Naive thymus-derived CD4-positive, alpha-beta T cell (primary cell): ENCODE measurements at regions of chr14 and their contacts with region 1.

Region 1: DNA sequence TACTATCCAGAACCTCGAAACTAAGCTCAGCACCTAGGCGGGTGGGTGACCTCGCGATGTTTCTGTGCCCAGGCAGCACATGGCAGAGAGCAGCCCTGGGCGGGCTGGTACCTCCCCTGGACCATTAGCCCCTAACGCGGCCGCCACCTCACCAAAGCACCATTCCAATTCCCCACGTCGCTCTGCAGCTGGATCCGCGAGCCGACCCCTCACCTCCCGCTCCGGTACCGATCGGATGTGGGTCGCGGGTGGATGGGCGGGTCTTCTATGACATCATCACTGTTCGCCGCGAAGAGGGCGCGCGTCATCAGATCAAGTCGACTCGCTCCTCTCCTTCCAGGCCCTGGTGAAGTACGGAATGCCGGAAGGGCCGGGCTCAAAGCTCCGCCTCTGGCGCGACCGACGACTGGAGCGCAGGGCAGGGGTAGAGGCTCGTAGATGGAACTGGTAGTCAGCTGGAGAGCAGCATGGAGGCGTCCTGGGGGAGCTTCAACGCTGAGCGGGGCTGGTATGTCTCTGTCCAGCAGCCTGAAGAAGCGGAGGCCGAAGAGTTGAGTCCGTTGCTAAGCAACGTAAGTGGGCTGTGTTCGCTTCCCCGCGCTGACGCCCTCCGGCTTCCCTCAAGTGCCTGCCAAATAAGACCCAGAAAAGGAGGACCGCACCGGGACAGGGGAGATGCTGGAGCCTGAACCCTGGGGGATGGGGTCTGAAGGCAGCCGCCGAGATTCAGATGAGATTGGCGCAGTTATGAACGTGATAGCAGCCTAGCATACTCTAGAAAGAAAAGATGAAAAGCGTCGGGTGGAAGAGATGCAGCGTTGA is at the starts of genes SLC38A6 and TRMT5:
- DNase-seq: peak; percentile 84 to 95 (median 93)
- ATAC-seq: peak; percentile 91
- H3K4me3 ChIP-seq: peak within 1 kb of the TSS; percentile 94
- H3K4me3 Mint-ChIP-seq: no peak within 1 kb of the TSS
- H3K27ac ChIP-seq: peak within 1 kb of the TSS; percentile 88
- H3K27ac Mint-ChIP-seq: no peak within 1 kb of the TSS
- H3K4me1 ChIP-seq: peaks cover 11 to 14% of the 10 kb centered on the region in 2 donors
- H3K4me1 Mint-ChIP-seq: peaks cover 12 to 39% (median 26%) of the 10 kb centered on the region in 7 donors
- H3K27me3 ChIP-seq: no peaks in the 10 kb centered on the region
- H3K27me3 Mint-ChIP-seq: no peaks in the 10 kb centered on the region
- total RNA-seq, gene SLC38A6: 8.9 to 21.9 (median 15.8) TPM
- total RNA-seq, gene TRMT5: 1.9 to 10.6 (median 6.5) TPM

Region 2: DNA sequence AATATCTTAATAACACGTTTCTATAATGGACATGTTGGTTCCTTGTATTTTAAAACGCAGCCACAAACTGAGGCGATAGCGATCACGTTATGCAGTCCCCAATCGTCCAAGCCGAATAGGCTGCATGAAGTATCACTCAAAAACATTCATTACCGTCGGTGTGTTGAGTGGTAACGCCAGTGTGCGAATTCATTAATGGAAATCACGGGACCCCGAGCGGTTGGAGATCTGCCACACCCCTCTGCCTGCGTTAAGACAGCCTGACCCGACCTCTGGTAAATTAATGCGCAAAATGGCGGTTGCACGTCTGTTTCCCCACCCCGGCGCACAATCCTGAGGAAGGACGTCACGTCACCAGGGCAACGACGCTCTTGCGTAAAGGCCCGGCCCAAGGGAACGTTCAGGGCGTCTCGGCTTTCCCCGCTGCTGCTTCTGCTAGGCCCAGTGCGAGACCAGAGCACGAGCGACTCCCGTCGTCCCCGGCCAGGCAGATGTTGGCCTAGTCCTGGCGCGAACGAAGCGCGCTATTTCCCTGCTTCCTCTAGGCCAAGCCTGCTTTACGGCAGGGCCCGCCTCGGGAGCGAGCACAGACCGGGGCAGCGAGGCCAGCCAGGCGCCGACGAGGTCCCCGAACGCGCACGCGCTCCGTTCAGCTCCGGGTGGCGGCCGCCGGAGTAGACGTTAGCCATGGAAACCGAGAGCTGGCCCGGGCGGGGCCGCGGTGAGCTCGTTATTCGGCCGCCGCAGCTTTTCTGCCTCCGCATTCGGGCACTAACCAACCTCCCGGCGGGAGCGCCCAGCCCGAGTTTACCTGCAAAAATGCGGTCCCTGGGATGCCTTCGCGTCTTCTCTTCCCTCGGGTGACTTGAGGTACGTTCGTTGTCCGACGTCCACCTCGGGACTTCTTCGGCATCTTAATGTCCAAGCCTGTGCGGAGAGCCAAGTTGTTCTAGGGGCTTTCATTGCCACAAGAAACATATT is 889.2 kb before region 1 on chr14 and contains the start of gene PCNX4:
- CTCF ChIA-PET with region 1: no interaction called
- POLR2A ChIA-PET with region 1: no interaction called
- intact Hi-C with region 1: loop called (anchors 5 kb)
- DNase-seq: peak; percentile 79 to 95 (median 94)
- ATAC-seq: peak; percentile 95
- H3K4me3 ChIP-seq: peak within 1 kb of the TSS; percentile 94
- H3K4me3 Mint-ChIP-seq: peak within 1 kb of the TSS; percentile 88 to 98 (median 95)
- H3K27ac ChIP-seq: peak within 1 kb of the TSS; percentile 96
- H3K27ac Mint-ChIP-seq: peak within 1 kb of the TSS; percentile 90 to 99 (median 96)
- H3K4me1 ChIP-seq: peaks cover 14 to 16% of the 10 kb centered on the region in 2 donors
- H3K4me1 Mint-ChIP-seq: peaks cover 28 to 48% (median 41%) of the 10 kb centered on the region in 7 donors
- H3K27me3 ChIP-seq: peaks cover 0 to 4% of the 10 kb centered on the region in 2 donors
- H3K27me3 Mint-ChIP-seq: peaks cover 0 to 5% (median 0%) of the 10 kb centered on the region in 5 donors
- total RNA-seq, gene PCNX4: 34.9 to 48.2 (median 43.3) TPM

Region 3: DNA sequence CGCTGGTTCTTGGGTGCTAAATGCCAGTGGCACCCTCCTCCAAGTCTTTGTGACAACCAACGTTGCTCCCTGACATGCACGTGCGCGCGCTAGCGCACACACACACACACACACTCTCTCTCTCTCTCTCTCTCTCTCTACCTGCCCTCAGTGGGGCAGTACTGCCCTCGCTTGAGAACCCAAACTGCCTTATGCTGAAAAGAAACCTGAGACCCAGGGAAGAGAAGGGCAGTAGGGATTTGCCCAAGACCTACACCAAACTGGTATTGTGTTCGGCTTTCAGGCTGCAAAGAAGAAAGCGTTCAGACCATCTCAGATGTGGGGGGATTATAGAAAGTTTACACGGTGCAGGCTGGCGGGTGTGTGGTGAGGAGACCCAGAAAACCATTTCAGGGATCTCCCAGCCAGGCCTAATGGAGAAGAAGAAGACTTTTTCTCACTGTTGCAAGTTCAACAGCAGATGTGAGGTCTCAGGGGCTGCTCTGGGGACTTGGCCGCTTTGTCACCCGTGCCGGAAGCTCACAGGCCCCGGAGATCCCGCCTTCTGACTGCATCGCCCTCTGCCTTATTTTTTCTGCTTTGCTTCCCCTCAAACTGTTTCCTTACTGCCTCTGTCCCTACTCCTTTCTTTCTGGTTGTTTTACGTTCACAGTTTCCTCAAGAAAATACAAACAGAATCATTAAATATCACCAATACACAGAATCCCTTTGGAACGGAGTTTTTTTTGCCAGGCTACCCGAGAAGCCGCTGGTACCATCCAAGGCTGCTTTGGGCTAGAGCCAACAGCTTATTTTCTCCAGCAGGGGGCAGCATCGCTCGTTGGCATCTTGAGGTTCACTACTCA is 649.6 kb before region 1 on chr14:
- CTCF ChIA-PET with region 1: no interaction called
- POLR2A ChIA-PET with region 1: no interaction called
- intact Hi-C with region 1: loop called in 1 of 2 experiments (anchors 2 kb)
- DNase-seq: peak; percentile 53 to 80 (median 74)
- ATAC-seq: peak; percentile 79
- H3K4me3 ChIP-seq: peak overlapping the region; percentile 55
- H3K4me3 Mint-ChIP-seq: peak overlapping the region; percentile 87 to 98 (median 96)
- H3K27ac ChIP-seq: peak overlapping the region; percentile 55
- H3K27ac Mint-ChIP-seq: peak overlapping the region; percentile 87 to 98 (median 92)
- H3K4me1 ChIP-seq: peaks cover 4 to 13% of the 10 kb centered on the region in 2 donors
- H3K4me1 Mint-ChIP-seq: peaks cover 12 to 46% (median 29%) of the 10 kb centered on the region in 7 donors
- H3K27me3 ChIP-seq: no peaks in the 10 kb centered on the region
- H3K27me3 Mint-ChIP-seq: peaks cover 15 to 44% (median 38%) of the 10 kb centered on the region in 5 donors

Region 4: GRCh38 chr14:60734465-60735242 is 246.4 kb before region 1 on chr14 and contains the start of gene MNAT1:
- CTCF ChIA-PET with region 1: no interaction called
- POLR2A ChIA-PET with region 1: no interaction called
- intact Hi-C with region 1: loop called (anchors 1 kb)
- DNase-seq: peak; percentile 65 to 81 (median 75)
- ATAC-seq: peak; percentile 95
- H3K4me3 ChIP-seq: peak within 1 kb of the TSS; percentile 64
- H3K4me3 Mint-ChIP-seq: peak within 1 kb of the TSS; percentile 95 to 100 (median 99)
- H3K27ac ChIP-seq: peak within 1 kb of the TSS; percentile 70
- H3K27ac Mint-ChIP-seq: peak within 1 kb of the TSS; percentile 88 to 99 (median 94)
- H3K4me1 ChIP-seq: peaks cover 0 to 10% of the 10 kb centered on the region in 2 donors
- H3K4me1 Mint-ChIP-seq: peaks cover 22 to 37% (median 29%) of the 10 kb centered on the region in 7 donors
- H3K27me3 ChIP-seq: peaks cover 0 to 4% of the 10 kb centered on the region in 2 donors
- H3K27me3 Mint-ChIP-seq: peaks cover 13 to 42% (median 22%) of the 10 kb centered on the region in 5 donors
- total RNA-seq, gene MNAT1: 16.0 to 39.1 (median 20.0) TPM

Region 5: GRCh38 chr14:61025251-61026223 is 44.5 kb after region 1 on chr14:
- CTCF ChIA-PET with region 1: no interaction called
- POLR2A ChIA-PET with region 1: no interaction called
- intact Hi-C with region 1: loop called in 1 of 2 experiments (anchors 2 kb)
- DNase-seq: peak in 7 of 9 donors; percentile 29 to 55 (median 43)
- ATAC-seq: peak; percentile 63
- H3K4me3 ChIP-seq: no peak overlapping the region
- H3K4me3 Mint-ChIP-seq: no peak overlapping the region
- H3K27ac ChIP-seq: no peak overlapping the region
- H3K27ac Mint-ChIP-seq: no peak overlapping the region
- H3K4me1 ChIP-seq: no peaks in the 10 kb centered on the region
- H3K4me1 Mint-ChIP-seq: no peaks in the 10 kb centered on the region
- H3K27me3 ChIP-seq: no peaks in the 10 kb centered on the region
- H3K27me3 Mint-ChIP-seq: no peaks in the 10 kb centered on the region

Region 6: DNA sequence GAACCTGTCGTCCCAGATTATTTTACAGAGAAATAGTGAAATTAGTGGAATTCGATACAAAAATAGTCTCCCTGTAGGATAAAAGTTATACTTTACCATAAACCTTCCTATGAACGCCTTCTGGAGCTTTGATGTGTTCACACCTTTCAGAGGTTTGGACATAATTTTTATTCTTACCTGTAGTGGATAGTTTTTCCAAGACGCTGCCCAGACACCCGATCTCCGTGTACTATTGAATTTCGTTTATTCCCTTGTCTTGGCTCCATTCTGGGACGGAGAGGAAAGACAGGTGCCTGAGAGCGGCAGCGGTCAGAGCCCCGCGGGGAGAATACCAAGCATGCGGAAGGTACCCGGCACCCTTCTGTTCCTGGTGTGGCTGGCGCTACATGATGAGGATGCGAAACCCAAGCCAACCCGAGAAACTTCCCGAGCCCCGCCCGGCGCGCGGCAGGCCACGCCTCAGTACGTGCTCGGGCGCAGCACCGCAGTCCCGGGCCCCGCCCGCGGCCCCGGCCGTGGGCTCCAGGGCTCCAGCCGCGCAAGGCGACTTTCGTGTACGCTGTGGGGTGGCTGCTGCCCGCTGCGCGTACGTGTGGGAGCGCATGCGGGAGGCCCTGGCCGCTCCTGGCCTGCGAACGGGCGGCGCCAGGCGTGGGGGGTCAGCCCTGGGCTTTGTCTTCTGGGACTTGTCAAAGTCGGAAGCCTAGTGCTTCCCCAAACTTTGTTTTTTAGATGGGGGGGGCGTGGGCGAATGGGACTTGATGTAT is 769.9 kb after region 1 on chr14:
- CTCF ChIA-PET with region 1: no interaction called
- POLR2A ChIA-PET with region 1: no interaction called
- intact Hi-C with region 1: loop called in 1 of 2 experiments (anchors 10 kb)
- DNase-seq: peak; percentile 53 to 89 (median 66)
- ATAC-seq: peak; percentile 92
- H3K4me3 ChIP-seq: peak overlapping the region; percentile 55
- H3K4me3 Mint-ChIP-seq: peak overlapping the region; percentile 75 to 94 (median 85)
- H3K27ac ChIP-seq: peak overlapping the region; percentile 75
- H3K27ac Mint-ChIP-seq: peak overlapping the region; percentile 26 to 88 (median 70)
- H3K4me1 ChIP-seq: no peaks in the 10 kb centered on the region
- H3K4me1 Mint-ChIP-seq: peaks cover 4 to 63% (median 11%) of the 10 kb centered on the region in 7 donors
- H3K27me3 ChIP-seq: no peaks in the 10 kb centered on the region
- H3K27me3 Mint-ChIP-seq: peaks cover 0 to 8% (median 1%) of the 10 kb centered on the region in 5 donors